Activated naive CD4-positive, alpha-beta T cell treated with anti-CD3 and anti-CD28 coated beads for 36 hours (primary cell): ENCODE measurements at regions of chr9 and their contacts with region 1.

Region 1: DNA sequence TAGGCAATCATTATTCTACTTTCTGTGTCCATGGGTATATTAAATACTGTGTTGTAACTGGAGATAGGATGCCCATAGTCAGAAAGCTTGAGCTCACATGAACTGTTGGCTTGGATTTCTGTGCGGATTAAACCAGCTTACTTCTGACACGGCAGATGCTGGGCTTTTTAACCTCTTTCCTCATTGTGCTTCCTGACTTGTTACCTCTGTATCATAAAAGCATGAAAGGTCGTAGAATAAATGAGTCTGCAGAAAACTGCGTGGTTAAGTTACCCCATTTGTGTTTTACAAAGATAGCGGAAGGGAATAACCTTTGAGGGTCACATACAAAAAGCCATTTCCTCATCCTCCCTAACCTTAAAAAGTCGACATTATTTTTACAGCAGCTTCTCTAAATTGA is 199.5 kb upstream of the DMRT1 start:
- DNase-seq: no peak
- H3K4me3 Mint-ChIP-seq: peak overlapping the region; percentile 41
- H3K27ac Mint-ChIP-seq: peak overlapping the region; percentile 27
- H3K4me1 Mint-ChIP-seq: peaks cover 35% of the 10 kb centered on the region
- H3K27me3 Mint-ChIP-seq: no peaks in the 10 kb centered on the region

Region 2: DNA sequence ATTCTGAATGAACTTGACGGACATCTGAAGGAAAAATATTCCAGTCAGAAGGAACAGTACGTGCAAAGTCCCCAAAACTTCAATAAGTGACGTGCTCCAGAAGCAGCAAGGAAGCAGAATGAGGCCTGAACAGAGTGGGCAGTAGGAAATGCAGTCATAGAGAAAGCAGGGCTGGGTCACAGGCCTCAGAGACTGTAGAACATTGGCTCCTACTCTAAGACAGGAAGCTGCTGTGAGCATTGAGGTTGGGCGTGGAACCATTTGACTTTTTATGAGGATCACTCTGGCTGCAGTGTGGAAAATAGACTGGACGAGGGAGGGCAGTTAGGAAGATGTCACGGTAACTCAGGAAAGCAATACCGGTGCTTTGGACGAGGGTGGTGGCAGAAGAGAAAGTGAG is 363.4 kb before region 1 on chr9:
- CTCF ChIA-PET with region 1: no interaction called
- intact Hi-C with region 1: loop called (anchors 5 kb)
- DNase-seq: peak; percentile 78
- H3K4me3 Mint-ChIP-seq: no peak overlapping the region
- H3K27ac Mint-ChIP-seq: no peak overlapping the region
- H3K4me1 Mint-ChIP-seq: peaks cover 42% of the 10 kb centered on the region
- H3K27me3 Mint-ChIP-seq: no peaks in the 10 kb centered on the region

Region 3: GRCh38 chr9:656926-657568 is 15.0 kb after region 1 on chr9:
- CTCF ChIA-PET with region 1: interaction called, 3 read pairs
- intact Hi-C with region 1: loop called (anchors 1 kb)
- DNase-seq: peak; percentile 52
- H3K4me3 Mint-ChIP-seq: no peak overlapping the region
- H3K27ac Mint-ChIP-seq: peak overlapping the region; percentile 1
- H3K4me1 Mint-ChIP-seq: peaks cover 36% of the 10 kb centered on the region
- H3K27me3 Mint-ChIP-seq: no peaks in the 10 kb centered on the region

Region 4: DNA sequence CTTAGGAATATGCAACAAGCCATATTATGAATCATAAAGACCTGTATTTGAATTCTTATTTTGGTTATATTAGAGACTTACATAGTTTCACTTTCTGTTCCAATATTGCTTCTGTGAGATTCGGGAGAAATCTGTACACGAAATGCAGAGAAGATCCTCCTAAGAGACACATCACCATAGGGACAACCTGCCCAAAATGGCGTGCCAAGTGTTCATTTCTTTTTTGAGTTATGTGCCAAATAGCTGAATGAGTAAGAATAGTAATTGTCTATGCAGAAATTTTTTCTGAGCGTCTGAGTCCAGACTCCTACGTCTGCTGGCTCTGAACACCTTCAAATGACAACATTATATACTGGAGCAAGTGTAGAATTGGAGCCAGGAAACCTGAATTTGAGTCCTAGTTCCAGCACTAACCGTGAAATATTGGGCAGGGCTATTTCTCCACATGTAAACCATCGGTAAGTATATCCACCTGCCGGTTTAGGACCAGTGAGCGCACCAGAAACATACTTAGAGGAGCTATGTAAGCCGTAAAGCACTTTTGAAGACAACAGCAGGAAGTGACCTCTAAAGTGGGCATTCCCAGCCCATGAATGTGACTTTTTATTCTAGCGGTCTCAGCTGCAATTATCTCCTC is 35.6 kb after region 1 on chr9:
- CTCF ChIA-PET with region 1: no interaction called
- intact Hi-C with region 1: loop called (anchors 2 kb)
- DNase-seq: peak; percentile 19
- H3K4me3 Mint-ChIP-seq: peak overlapping the region; percentile 52
- H3K27ac Mint-ChIP-seq: no peak overlapping the region
- H3K4me1 Mint-ChIP-seq: peaks cover 30% of the 10 kb centered on the region
- H3K27me3 Mint-ChIP-seq: no peaks in the 10 kb centered on the region

Region 5: GRCh38 chr9:706606-707459 is 64.8 kb after region 1 on chr9:
- CTCF ChIA-PET with region 1: no interaction called
- intact Hi-C with region 1: loop called (anchors 2 kb)
- DNase-seq: peak; percentile 71
- H3K4me3 Mint-ChIP-seq: peak overlapping the region; percentile 84
- H3K27ac Mint-ChIP-seq: peak overlapping the region; percentile 77
- H3K4me1 Mint-ChIP-seq: peaks cover 16% of the 10 kb centered on the region
- H3K27me3 Mint-ChIP-seq: no peaks in the 10 kb centered on the region

Region 6: GRCh38 chr9:2260354-2261306 is 1618.6 kb after region 1 on chr9:
- CTCF ChIA-PET with region 1: no interaction called
- intact Hi-C with region 1: no loop called
- DNase-seq: peak; percentile 6
- H3K4me3 Mint-ChIP-seq: no peak overlapping the region
- H3K27ac Mint-ChIP-seq: no peak overlapping the region
- H3K4me1 Mint-ChIP-seq: peaks cover 4% of the 10 kb centered on the region
- H3K27me3 Mint-ChIP-seq: peaks cover 6% of the 10 kb centered on the region